ENCODE measurements at regions of chr19 and their contacts with region 1.

Region 1: DNA sequence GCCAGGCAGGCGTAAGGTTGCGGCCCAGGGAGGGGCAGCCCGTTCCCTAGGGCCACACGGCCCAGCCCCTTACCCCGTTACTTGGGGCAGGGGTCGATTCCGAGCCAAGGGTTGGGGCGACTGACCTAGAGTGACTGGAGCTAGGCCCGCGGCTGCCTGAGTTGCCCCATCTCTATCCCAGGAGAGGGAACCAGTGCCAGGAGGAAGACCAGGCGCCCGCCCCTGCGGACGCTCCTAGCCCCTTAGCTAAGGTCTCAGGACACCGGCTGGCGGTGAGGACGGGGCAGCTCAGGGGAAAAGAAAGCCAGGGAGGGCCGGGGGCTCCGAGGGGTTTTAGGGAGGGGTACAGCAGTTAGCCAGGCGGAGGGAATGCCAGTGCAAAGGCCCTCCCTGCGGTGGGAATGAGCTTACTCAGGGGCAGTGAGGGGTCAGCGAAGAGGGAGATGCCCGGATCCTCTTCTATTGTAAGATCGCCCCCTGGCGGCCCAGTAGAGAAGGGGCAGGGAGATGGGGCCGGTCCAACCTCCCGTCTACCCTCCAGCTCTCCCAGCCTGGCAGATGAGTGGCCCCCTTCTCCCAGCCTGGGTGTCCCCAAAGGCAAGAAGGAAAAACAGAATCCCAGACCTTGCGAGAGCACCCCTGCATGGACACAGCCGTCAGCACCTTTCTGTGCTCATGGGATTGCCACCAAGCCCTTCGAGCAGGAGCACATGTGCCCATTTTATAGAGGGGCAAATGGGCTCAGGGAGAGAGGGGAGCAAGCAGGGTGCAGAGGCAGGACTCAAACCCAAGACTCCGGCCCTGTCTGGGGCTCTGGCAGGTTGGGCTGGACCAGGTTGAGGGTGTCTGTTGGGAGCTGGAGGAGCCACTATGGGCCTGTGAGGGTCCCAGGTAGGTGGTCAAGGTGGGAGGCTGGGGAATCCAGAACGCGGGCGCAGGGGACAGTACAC is 16.3 kb downstream of the CILP2 start:
- DNase-seq: peak; percentile 60
- H3K4me3 Mint-ChIP-seq: no peak overlapping the region
- H3K27ac Mint-ChIP-seq: peak overlapping the region; percentile 9
- H3K4me1 Mint-ChIP-seq: peaks cover 10% of the 10 kb centered on the region
- H3K27me3 Mint-ChIP-seq: no peaks in the 10 kb centered on the region

Region 2: GRCh38 chr19:19568802-19569756 is 14.7 kb after region 1 on chr19:
- CTCF ChIA-PET with region 1: interaction called, 13 read pairs
- POLR2A ChIA-PET with region 1: no interaction called
- DNase-seq: no peak
- H3K4me3 Mint-ChIP-seq: no peak overlapping the region
- H3K27ac Mint-ChIP-seq: peak overlapping the region; percentile 68
- H3K4me1 Mint-ChIP-seq: no peaks in the 10 kb centered on the region
- H3K27me3 Mint-ChIP-seq: no peaks in the 10 kb centered on the region